AG04450 (cell line): ENCODE measurements at regions of chr6 and their contacts with region 1.

Region 1: GRCh38 chr6:28393911-28394662 is 5.5 kb downstream of the ZSCAN12 start:
- DNase-seq: no peak
- H3K4me3 ChIP-seq: no peak overlapping the region
- H3K27ac ChIP-seq: no peak overlapping the region
- H3K27me3 ChIP-seq: no peaks in the 10 kb centered on the region
- CTCF ChIP-seq: peak; percentile 39

Region 2: GRCh38 chr6:28377879-28378278 is 16.2 kb before region 1 on chr6:
- CTCF ChIA-PET with region 1: interaction called, 24 read pairs
- POLR2A ChIA-PET with region 1: no interaction called
- DNase-seq: no peak
- H3K4me3 ChIP-seq: no peak overlapping the region
- H3K27ac ChIP-seq: no peak overlapping the region
- H3K27me3 ChIP-seq: no peaks in the 10 kb centered on the region
- CTCF ChIP-seq: no peak

Region 3: GRCh38 chr6:28383235-28384142 is 10.6 kb before region 1 on chr6:
- CTCF ChIA-PET with region 1: interaction called, 24 read pairs
- POLR2A ChIA-PET with region 1: interaction called, 6 read pairs
- DNase-seq: peak; percentile 65
- H3K4me3 ChIP-seq: peak overlapping the region; percentile 57
- H3K27ac ChIP-seq: peak overlapping the region; percentile 66
- H3K27me3 ChIP-seq: no peaks in the 10 kb centered on the region
- CTCF ChIP-seq: peak; percentile 63

Region 4: GRCh38 chr6:28408076-28408802 is 14.2 kb after region 1 on chr6:
- CTCF ChIA-PET with region 1: no interaction called
- POLR2A ChIA-PET with region 1: no interaction called
- DNase-seq: no peak
- H3K4me3 ChIP-seq: no peak overlapping the region
- H3K27ac ChIP-seq: no peak overlapping the region
- H3K27me3 ChIP-seq: peaks cover 3% of the 10 kb centered on the region
- CTCF ChIP-seq: no peak